PC-3 (cell line): ENCODE measurements at regions of chr15 and their contacts with region 1.

Region 1: GRCh38 chr15:40702077-40702476 is 7.1 kb downstream of the RAD51 start:
- DNase-seq: peak; percentile 37
- ATAC-seq: no peak
- H3K4me3 ChIP-seq: no peak overlapping the region
- H3K27ac ChIP-seq: no peak overlapping the region
- H3K4me1 ChIP-seq: no peaks in the 10 kb centered on the region
- H3K27me3 ChIP-seq: no peaks in the 10 kb centered on the region
- CTCF ChIP-seq: peak; percentile 53

Region 2: DNA sequence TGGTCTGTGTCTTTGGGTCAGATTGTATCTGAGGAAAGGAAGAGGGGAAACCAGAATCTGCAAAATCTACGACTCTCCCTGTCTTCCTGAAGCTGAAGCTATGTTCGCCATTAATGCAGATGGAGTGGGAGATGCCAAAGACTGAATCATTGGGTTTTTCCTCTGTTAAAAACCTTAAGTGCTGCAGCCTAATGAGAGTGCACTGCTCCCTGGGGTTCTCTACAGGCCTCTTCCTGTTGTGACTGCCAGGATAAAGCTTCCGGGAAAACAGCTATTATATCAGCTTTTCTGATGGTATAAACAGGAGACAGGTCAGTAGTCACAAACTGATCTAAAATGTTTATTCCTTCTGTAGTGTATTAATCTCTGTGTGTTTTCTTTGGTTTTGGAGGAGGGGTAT is 29.0 kb after region 1 on chr15:
- CTCF ChIA-PET with region 1: no interaction called
- POLR2A ChIA-PET with region 1: no interaction called
- intact Hi-C with region 1: loop called (anchors 2 kb)
- DNase-seq: no peak
- ATAC-seq: no peak
- H3K4me3 ChIP-seq: no peak overlapping the region
- H3K27ac ChIP-seq: no peak overlapping the region
- H3K4me1 ChIP-seq: peaks cover 3% of the 10 kb centered on the region
- H3K27me3 ChIP-seq: no peaks in the 10 kb centered on the region
- CTCF ChIP-seq: no peak

Region 3: DNA sequence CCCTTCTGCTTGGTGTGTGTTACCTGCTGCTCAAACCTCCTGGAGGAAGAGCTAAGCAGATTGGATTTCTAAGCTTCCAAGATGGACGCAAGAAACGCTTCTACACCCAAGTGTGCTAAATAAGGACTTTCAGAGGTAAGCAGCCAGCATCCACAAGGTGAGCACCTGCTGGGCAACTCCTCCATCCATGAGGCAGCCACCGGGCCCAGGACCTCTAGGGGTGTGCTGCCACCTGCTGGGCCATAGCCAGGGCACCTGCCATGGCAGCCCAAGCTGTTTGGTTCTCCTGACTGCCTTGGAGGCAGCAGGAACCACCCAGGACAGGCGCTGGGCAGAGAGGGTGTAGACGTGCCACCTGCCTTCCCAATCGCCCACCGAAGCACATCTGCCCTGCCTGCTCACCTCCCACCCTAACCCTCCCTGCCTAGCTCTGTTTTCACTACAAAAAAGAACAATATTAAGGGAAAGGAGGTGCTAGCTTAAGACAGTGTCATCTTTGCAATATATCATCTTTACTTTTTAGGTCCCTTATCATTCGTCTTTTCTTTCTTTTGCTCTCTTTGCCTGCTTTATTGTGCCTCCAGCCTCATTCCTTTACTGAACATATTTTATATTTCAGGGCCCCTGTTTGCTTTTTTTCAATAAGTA is 80.6 kb after region 1 on chr15:
- CTCF ChIA-PET with region 1: interaction called, 4 read pairs
- POLR2A ChIA-PET with region 1: no interaction called
- intact Hi-C with region 1: loop called (anchors 2 kb)
- DNase-seq: peak; percentile 90
- ATAC-seq: peak; percentile 90
- H3K4me3 ChIP-seq: no peak overlapping the region
- H3K27ac ChIP-seq: no peak overlapping the region
- H3K4me1 ChIP-seq: peaks cover 28% of the 10 kb centered on the region
- H3K27me3 ChIP-seq: no peaks in the 10 kb centered on the region
- CTCF ChIP-seq: peak; percentile 93

Region 4: GRCh38 chr15:40952901-40953712 is 251.0 kb after region 1 on chr15 and contains the start of gene CHAC1:
- CTCF ChIA-PET with region 1: no interaction called
- POLR2A ChIA-PET with region 1: no interaction called
- intact Hi-C with region 1: no loop called
- DNase-seq: peak; percentile 97
- ATAC-seq: peak; percentile 91
- H3K4me3 ChIP-seq: peak within 1 kb of the TSS; percentile 79
- H3K27ac ChIP-seq: peak within 1 kb of the TSS; percentile 35
- H3K4me1 ChIP-seq: peaks cover 16% of the 10 kb centered on the region
- H3K27me3 ChIP-seq: no peaks in the 10 kb centered on the region
- CTCF ChIP-seq: no peak
- total RNA-seq, gene CHAC1: 6.2 and 13.3 TPM in 2 replicates